Activated CD8-positive, alpha-beta T cell treated with anti-CD3 and anti-CD28 coated beads for 36 hours (primary cell): ENCODE measurements at regions of chr10 and their contacts with region 1.

Region 1: GRCh38 chr10:128011175-128011979 is 104.5 kb downstream of the PTPRE start:
- DNase-seq: peak; percentile 86
- ATAC-seq: peak; percentile 97
- H3K4me3 Mint-ChIP-seq: no peak overlapping the region
- H3K27ac Mint-ChIP-seq: no peak overlapping the region
- H3K4me1 Mint-ChIP-seq: peaks cover 8% of the 10 kb centered on the region
- H3K27me3 Mint-ChIP-seq: peaks cover 8% of the 10 kb centered on the region
- CTCF ChIP-seq: peak; percentile 97

Region 2: DNA sequence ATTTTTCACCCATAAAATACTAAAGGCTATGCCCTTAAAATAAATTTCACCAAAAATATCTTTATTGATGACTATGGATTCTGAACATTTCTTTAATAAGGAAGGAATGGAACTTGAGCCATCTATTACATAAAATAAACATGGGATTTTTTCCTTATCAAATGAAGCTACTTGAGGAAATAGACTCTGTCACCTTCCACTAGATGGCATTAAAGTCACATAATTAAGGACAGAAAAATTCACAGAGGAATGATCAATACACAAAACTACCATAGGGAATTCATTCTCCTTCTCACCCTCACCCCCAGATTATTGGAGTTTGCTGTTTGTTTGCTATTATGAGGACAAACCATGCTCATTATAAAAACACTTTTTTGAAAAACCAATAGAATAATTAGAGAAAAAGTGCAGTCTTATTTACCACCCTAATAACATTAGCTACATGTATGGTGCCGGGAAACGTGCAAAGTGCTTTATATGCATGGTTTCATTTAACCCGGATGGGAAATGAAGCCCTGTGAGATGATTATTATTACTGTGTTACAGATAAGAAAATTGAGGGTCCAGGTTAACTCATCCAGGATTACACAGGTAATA is 295.5 kb before region 1 on chr10:
- CTCF ChIA-PET with region 1: interaction called, 3 read pairs
- POLR2A ChIA-PET with region 1: no interaction called
- intact Hi-C with region 1: loop called (anchors 10 kb)
- DNase-seq: no peak
- ATAC-seq: no peak
- H3K4me3 Mint-ChIP-seq: no peak overlapping the region
- H3K27ac Mint-ChIP-seq: no peak overlapping the region
- H3K4me1 Mint-ChIP-seq: no peaks in the 10 kb centered on the region
- H3K27me3 Mint-ChIP-seq: no peaks in the 10 kb centered on the region
- CTCF ChIP-seq: peak; percentile 31

Region 3: DNA sequence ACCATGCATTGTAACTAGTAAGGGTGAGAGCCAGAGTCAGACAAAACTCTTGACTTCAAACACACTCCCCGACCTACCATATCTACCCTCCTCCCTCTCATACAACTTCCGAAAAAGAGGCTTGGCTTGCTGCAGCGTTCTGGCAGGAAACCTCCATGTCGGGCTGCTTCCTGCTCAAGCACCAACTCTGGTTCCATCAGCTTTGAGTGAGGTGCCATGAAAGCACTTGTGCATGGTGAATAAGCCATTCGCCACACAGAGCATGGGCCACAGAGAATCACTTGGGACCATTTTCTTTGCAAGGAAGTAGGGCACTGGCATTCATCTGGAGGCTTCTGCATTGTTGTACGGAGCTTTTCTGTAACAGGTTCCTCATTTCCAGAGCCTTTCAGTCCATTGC is 221.2 kb before region 1 on chr10:
- CTCF ChIA-PET with region 1: no interaction called
- POLR2A ChIA-PET with region 1: no interaction called
- intact Hi-C with region 1: no loop called
- DNase-seq: no peak
- ATAC-seq: no peak
- H3K4me3 Mint-ChIP-seq: no peak overlapping the region
- H3K27ac Mint-ChIP-seq: no peak overlapping the region
- H3K4me1 Mint-ChIP-seq: no peaks in the 10 kb centered on the region
- H3K27me3 Mint-ChIP-seq: peaks cover 9% of the 10 kb centered on the region
- CTCF ChIP-seq: no peak

Region 4: DNA sequence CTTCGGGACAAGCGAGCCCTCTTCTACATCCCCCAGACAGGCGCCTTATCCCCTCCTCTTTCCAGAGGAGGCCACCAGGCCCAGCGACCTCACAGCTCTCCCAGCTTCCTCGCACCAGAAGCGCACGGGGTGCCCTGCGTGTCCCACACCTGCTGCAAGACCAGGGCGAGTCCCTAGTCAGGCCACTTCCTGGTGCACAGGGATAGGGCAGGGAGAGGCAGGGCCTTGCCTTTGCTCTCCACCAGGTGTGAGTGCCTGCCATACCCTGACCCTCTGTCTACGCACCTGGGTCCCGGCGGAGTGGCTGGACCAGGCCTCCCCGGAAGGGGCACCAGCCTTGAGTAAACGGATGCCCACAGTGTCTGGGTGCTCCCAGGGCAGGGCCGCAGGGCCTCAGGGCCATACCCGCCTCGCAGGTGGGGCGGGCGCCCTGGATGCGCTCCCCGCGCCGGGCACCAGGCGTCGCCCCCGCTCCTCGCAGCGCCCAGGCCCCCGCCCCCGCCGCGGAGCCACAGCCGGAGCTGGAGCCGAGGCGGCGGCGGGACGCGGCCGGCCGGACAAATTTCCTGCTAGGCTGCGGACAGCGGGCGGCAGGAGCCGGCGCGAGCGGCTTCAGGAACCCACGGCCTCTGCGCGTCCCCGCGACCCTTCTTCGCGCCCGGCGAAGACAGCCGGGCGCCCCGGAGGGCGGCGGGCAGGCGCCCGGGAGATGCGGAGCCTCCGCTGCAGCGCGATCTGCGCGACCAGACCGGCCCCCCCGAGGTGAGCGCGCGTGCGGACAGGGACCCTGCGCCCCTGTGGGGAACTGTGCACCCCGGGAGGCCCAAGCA is 104.6 kb before region 1 on chr10 and contains the start of gene PTPRE:
- CTCF ChIA-PET with region 1: interaction called, 188 read pairs
- POLR2A ChIA-PET with region 1: interaction called, 5 read pairs
- intact Hi-C with region 1: loop called (anchors 2 kb)
- DNase-seq: peak; percentile 73
- ATAC-seq: peak; percentile 99
- H3K4me3 Mint-ChIP-seq: no peak within 1 kb of the TSS
- H3K27ac Mint-ChIP-seq: no peak within 1 kb of the TSS
- H3K4me1 Mint-ChIP-seq: no peaks in the 10 kb centered on the region
- H3K27me3 Mint-ChIP-seq: peaks cover 31% of the 10 kb centered on the region
- CTCF ChIP-seq: peak; percentile 86
- total RNA-seq, gene PTPRE: 19.9 to 22.3 TPM

Region 5: GRCh38 chr10:127926455-127926854 is 84.9 kb before region 1 on chr10:
- CTCF ChIA-PET with region 1: interaction called, 12 read pairs
- POLR2A ChIA-PET with region 1: interaction called, 5 read pairs
- intact Hi-C with region 1: no loop called
- DNase-seq: no peak
- ATAC-seq: no peak
- H3K4me3 Mint-ChIP-seq: no peak overlapping the region
- H3K27ac Mint-ChIP-seq: no peak overlapping the region
- H3K4me1 Mint-ChIP-seq: no peaks in the 10 kb centered on the region
- H3K27me3 Mint-ChIP-seq: no peaks in the 10 kb centered on the region
- CTCF ChIP-seq: no peak

Region 6: GRCh38 chr10:128000471-128001362 is 10.7 kb before region 1 on chr10:
- CTCF ChIA-PET with region 1: interaction called, 29 read pairs
- POLR2A ChIA-PET with region 1: interaction called, 4 read pairs
- intact Hi-C with region 1: no loop called
- DNase-seq: no peak
- ATAC-seq: no peak
- H3K4me3 Mint-ChIP-seq: no peak overlapping the region
- H3K27ac Mint-ChIP-seq: no peak overlapping the region
- H3K4me1 Mint-ChIP-seq: no peaks in the 10 kb centered on the region
- H3K27me3 Mint-ChIP-seq: peaks cover 23% of the 10 kb centered on the region
- CTCF ChIP-seq: no peak

Region 7: GRCh38 chr10:128035557-128035973 is 24.2 kb after region 1 on chr10:
- CTCF ChIA-PET with region 1: interaction called, 35 read pairs
- POLR2A ChIA-PET with region 1: no interaction called
- intact Hi-C with region 1: no loop called
- DNase-seq: peak; percentile 80
- ATAC-seq: peak; percentile 94
- H3K4me3 Mint-ChIP-seq: no peak overlapping the region
- H3K27ac Mint-ChIP-seq: no peak overlapping the region
- H3K4me1 Mint-ChIP-seq: peaks cover 10% of the 10 kb centered on the region
- H3K27me3 Mint-ChIP-seq: no peaks in the 10 kb centered on the region
- CTCF ChIP-seq: peak; percentile 89

Region 8: DNA sequence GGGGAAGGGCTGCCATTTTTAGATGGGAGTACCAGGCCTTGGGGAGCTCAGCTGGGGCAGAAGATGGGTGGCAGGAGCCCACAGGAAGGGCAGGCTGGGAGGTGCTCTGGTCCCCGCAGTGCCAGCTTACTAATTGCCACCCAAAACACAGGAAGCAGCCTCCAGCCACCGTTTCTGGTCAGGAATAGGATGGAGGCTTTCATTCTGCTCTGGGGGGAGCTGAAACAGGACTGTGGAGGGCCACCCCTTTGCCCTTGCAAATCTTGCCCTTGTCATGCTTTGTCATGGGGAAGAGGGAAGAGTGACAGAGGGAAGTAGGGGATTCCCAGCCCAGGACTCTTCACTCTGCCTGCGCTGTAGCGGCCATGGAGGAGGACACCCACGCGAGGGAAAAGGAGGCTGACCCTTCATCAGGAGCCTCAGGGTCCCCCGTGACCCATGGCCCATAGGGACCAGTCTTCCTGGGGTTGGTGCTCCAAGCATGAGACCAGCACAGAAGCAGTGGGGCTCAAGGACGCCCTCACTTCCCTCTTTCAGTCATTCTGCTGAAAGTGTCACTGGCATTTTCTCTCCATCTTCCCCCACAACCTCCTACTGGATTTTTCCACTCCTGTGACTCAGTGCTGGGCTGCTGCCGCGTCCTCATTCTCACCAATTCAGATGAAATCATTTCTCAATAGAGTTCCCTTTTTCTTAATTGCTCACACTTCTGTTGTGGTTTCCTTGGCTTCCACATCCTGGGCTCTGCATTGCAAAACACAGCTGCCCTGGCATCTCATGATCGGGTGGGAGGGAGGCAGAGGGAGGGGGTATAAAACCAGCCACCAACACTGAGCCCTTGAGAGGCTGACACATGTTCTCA is 53.0 kb after region 1 on chr10:
- CTCF ChIA-PET with region 1: interaction called, 35 read pairs
- POLR2A ChIA-PET with region 1: no interaction called
- intact Hi-C with region 1: loop called (anchors 10 kb)
- DNase-seq: peak; percentile 92
- ATAC-seq: peak; percentile 82
- H3K4me3 Mint-ChIP-seq: peak overlapping the region; percentile 72
- H3K27ac Mint-ChIP-seq: peak overlapping the region; percentile 94
- H3K4me1 Mint-ChIP-seq: peaks cover 72% of the 10 kb centered on the region
- H3K27me3 Mint-ChIP-seq: no peaks in the 10 kb centered on the region
- CTCF ChIP-seq: no peak